Endothelial cell of umbilical vein (primary cell): ENCODE measurements at regions of chr2 and their contacts with region 1.

Region 1: GRCh38 chr2:24827321-24828237 is 34.4 kb downstream of the CENPO start:
- DNase-seq: peak; percentile 82
- H3K4me3 ChIP-seq: no peak overlapping the region
- H3K27ac ChIP-seq: no peak overlapping the region
- H3K4me1 ChIP-seq: peaks cover 20% of the 10 kb centered on the region
- H3K27me3 ChIP-seq: no peaks in the 10 kb centered on the region
- CTCF ChIP-seq: peak; percentile 91 to 93
- POLR2A ChIP-seq: no peak

Region 2: DNA sequence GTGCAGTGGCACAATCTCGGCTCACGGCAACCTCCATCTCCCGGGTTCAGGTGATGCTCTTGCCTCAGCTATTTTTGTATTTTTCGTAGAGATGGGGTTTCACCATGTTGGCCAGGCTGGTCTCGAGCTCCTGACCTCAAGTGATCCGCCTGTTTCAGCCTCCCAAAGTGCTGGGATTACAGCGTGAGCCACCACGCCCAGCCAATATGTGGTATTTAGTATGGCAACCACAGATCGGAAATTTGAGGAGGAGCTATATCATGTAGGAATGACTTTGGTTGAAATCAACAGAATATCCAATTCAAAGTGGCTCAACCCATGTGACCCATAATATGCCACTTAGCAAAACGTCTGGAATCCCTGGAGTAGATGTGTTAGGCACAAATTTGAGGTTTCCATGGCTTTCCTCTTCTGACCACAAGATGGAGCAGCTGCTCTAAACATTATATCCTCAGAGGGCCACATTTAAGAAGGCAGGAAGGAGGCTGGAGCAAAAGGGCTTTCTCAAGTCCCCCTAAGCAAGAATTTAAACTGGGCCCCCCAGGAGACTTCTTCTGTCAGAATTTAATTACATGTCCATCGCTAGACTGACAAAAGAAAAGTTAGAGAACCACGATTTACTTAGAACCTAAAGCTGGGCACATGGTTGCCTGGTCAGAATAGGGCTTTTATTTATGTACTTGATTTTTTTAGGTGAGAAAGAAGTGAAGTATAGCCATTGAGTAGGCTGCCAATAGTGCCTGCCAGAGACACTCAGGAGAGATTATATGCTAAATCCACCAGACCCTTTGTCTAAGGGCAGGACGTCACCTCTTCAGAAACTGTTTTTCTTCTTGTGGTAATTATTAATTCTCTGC is 417.7 kb before region 1 on chr2:
- CTCF ChIA-PET with region 1: interaction called, 198 read pairs
- POLR2A ChIA-PET with region 1: no interaction called
- dilution Hi-C with region 1: no loop called
- intact Hi-C with region 1: loop called (anchors 1 kb)
- DNase-seq: peak; percentile 68
- H3K4me3 ChIP-seq: no peak overlapping the region
- H3K27ac ChIP-seq: no peak overlapping the region
- H3K4me1 ChIP-seq: no peaks in the 10 kb centered on the region
- H3K27me3 ChIP-seq: no peaks in the 10 kb centered on the region
- CTCF ChIP-seq: peak; percentile 69 to 74
- POLR2A ChIP-seq: no peak

Region 3: DNA sequence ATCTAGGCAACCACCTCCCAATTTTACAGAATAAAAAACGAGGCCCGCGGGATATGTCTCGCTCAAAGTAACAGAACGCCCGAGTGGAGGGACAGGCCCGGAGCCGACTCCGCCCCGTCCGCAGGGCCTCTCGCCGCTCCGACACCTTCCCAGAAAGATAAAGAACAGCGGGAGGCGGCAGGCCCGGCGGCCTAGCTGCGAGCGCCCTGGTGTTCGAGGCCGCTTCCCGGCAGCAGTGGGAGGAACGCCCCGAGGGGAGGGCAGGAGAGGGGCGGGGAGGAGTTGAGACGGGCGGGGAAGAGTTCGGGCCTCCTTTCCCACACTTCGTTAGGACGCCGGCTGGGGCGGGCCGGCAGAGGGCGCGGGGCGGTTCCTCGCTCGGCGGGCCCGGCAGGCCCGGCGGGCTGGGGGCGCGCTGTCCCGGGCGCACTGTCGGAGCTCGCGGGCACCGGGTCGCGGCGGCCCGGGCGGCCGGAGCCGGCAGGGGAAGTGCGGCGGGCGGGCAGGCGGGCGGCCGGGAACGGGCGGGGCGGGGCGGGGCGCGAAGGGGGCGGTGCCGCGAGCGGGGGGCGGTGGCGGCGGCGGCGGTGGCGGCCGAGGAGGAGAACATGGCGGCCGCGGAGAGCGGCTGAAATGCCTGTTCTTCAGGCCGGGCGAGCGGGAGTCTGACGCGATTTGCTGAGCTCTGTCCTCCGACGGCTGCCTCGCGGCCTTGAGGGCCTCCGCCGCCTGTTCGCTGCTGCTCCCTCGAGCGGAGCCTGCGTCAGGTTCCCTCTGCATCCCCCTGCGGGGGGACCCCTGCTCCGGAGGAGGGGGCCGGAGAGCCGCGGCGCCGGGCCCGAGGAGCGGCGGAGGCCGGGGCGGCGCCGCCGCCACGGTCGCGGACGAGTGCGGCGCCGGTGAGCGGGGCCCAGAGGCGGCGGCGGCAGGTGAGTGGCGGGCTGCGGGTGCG is 336.6 kb before region 1 on chr2 and contains the start of gene NCOA1:
- CTCF ChIA-PET with region 1: interaction called, 3 read pairs
- POLR2A ChIA-PET with region 1: no interaction called
- dilution Hi-C with region 1: no loop called
- intact Hi-C with region 1: loop called (anchors 2 kb)
- DNase-seq: peak; percentile 84
- H3K4me3 ChIP-seq: peak within 1 kb of the TSS; percentile 62 to 78 (median 76)
- H3K27ac ChIP-seq: peak within 1 kb of the TSS; percentile 26
- H3K4me1 ChIP-seq: peaks cover 29% of the 10 kb centered on the region
- H3K27me3 ChIP-seq: peaks cover 0 to 3% of the 10 kb centered on the region in 2 experiments
- CTCF ChIP-seq: peak in 1 of 2 donors; percentile 29
- POLR2A ChIP-seq: no peak
- total RNA-seq, gene NCOA1: 10.9 and 14.1 TPM in 2 replicates

Region 4: DNA sequence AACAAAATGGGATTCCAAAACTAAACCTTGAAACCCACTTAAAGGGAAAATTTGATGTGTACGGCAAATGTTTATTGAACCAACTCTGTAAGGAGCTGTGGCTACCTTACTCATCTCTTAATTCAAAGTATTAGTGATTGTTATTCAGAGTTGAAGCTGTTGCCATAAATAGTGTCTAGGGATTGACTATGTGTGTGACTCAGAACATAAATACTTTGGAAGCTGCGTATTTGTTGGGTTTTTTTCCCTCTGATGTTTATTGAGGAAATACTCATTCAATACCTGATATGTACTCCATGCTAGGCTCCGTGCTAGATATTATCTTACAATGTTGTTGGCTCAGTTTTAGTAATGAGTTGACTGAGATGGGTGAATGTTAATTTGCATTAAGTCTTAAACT is 124.8 kb before region 1 on chr2:
- CTCF ChIA-PET with region 1: interaction called, 4 read pairs
- POLR2A ChIA-PET with region 1: no interaction called
- dilution Hi-C with region 1: no loop called
- intact Hi-C with region 1: loop called (anchors 5 kb)
- DNase-seq: peak; percentile 88
- H3K4me3 ChIP-seq: no peak overlapping the region
- H3K27ac ChIP-seq: peak overlapping the region; percentile 70
- H3K4me1 ChIP-seq: peaks cover 13% of the 10 kb centered on the region
- H3K27me3 ChIP-seq: no peaks in the 10 kb centered on the region
- CTCF ChIP-seq: no peak
- POLR2A ChIP-seq: no peak

Region 5: DNA sequence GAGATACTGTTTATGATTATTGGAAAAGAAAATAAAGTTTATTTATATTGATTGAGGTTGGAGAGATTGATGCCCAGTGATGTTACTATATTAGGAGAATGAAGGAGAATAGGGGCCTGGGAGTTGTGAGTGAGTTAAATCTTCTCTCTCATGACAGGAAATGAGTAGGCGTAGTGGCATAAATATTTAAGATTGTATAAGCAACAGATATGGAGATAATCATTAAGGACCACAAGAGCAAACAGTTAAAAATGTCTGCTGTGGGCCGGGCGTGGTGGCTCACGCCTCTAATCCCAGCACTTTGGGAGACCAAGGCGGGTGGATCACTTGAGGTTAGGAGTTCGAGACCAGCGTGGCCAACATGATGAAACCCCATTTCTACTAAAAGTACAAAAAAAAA is 97.1 kb before region 1 on chr2:
- CTCF ChIA-PET with region 1: no interaction called
- POLR2A ChIA-PET with region 1: no interaction called
- dilution Hi-C with region 1: no loop called
- intact Hi-C with region 1: no loop called
- DNase-seq: peak; percentile 34
- H3K4me3 ChIP-seq: no peak overlapping the region
- H3K27ac ChIP-seq: peak overlapping the region; percentile 7
- H3K4me1 ChIP-seq: peaks cover 16% of the 10 kb centered on the region
- H3K27me3 ChIP-seq: no peaks in the 10 kb centered on the region
- CTCF ChIP-seq: no peak
- POLR2A ChIP-seq: no peak

Region 6: DNA sequence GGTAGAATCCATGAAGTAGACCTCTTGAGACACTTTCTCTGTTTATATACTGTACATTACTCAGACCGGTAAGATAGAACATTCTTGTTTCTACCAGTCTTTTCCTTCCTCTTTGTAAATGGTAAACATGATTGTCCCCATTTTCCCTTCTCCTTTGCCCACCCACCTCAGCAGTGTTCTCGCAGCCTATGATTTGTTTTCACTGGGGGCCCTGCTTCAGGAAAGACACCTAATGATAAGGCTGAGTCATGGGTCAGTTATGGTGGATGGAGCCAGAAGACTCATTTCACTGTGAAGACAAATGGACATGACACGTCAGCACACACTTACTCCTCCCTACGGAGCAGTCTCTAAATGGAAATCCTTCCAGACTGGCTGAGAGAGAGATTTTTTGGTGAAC is 10.7 kb before region 1 on chr2:
- CTCF ChIA-PET with region 1: interaction called, 22 read pairs
- POLR2A ChIA-PET with region 1: interaction called, 3 read pairs
- dilution Hi-C with region 1: no loop called
- intact Hi-C with region 1: loop called (anchors 1 kb)
- DNase-seq: peak; percentile 87
- H3K4me3 ChIP-seq: no peak overlapping the region
- H3K27ac ChIP-seq: peak overlapping the region; percentile 74
- H3K4me1 ChIP-seq: peaks cover 19% of the 10 kb centered on the region
- H3K27me3 ChIP-seq: no peaks in the 10 kb centered on the region
- CTCF ChIP-seq: no peak
- POLR2A ChIP-seq: no peak

Region 7: DNA sequence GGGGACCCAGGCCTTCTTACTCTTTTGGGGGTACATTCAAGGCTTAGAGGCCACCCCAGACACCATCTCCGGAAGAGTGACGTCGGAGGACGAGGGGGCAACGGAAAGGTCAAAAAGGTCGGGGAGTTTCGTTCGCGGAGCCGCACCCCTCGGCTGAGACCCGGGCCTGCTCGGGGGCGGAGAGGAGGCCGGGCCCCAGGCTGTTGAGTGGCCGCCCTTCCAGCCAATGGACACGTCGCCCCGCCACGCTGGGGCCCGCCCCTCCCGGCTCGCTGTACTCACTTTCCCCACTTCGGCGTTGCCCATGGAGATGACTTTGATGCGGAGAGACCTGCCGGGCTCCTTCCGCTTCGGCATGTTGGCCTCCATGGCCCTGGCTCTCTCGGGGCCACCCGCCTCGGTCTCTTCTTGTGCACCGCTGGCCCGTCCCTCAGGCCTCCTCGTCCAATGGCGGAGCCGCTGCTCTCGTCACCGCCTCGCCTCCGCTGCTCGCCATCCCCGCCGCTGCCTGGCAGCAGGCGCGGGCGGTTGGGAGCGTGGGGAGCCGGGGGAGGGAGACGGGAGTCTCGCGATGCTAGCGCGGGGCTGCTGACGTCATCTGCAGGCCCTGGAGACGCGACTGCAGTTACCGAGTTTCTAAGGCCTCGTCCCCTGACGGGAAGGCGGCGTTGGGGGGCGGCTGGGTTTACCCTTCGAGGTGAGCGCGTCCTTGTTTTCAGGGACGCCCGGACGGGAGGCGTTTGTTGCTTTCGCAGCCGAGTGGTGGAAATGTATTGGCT is 144.1 kb after region 1 on chr2 and contains the start of gene DNAJC27:
- CTCF ChIA-PET with region 1: interaction called, 11 read pairs
- POLR2A ChIA-PET with region 1: no interaction called
- dilution Hi-C with region 1: no loop called
- intact Hi-C with region 1: loop called (anchors 5 kb)
- DNase-seq: peak; percentile 99
- H3K4me3 ChIP-seq: peak within 1 kb of the TSS; percentile 57 to 79 (median 72)
- H3K27ac ChIP-seq: peak within 1 kb of the TSS; percentile 90
- H3K4me1 ChIP-seq: peaks cover 10% of the 10 kb centered on the region
- H3K27me3 ChIP-seq: no peaks in the 10 kb centered on the region
- CTCF ChIP-seq: peak in 1 of 2 donors; percentile 2
- POLR2A ChIP-seq: peak; percentile 93
- total RNA-seq, gene DNAJC27: 3.2 and 3.9 TPM in 2 replicates

Region 8: DNA sequence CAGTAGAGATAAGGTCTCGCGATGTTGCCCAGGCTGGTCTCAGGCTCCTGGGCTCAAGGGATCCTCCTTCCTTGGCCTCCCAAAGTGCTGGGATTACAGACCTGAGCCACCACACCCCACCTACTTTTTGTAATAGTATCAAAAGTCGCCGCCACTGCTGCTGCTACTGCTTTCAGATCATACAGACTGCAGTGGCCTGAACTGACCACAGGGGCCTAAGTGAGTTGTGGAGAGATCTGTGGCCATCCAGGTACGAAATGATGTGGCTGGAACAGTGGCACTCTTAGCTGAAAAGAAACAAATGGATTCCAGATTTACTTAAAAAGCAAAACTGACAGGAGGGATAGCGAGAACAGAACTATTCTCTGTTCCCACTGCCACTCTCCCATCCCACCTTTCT is 373.7 kb after region 1 on chr2:
- CTCF ChIA-PET with region 1: interaction called, 6 read pairs
- POLR2A ChIA-PET with region 1: no interaction called
- dilution Hi-C with region 1: no loop called
- intact Hi-C with region 1: loop called (anchors 1 kb)
- DNase-seq: no peak
- H3K4me3 ChIP-seq: no peak overlapping the region
- H3K27ac ChIP-seq: no peak overlapping the region
- H3K4me1 ChIP-seq: no peaks in the 10 kb centered on the region
- H3K27me3 ChIP-seq: no peaks in the 10 kb centered on the region
- CTCF ChIP-seq: peak in 1 of 2 donors; percentile 21
- POLR2A ChIP-seq: no peak